Calu3 (cell line): ENCODE measurements at regions of chr2 and their contacts with region 1.

Region 1: GRCh38 chr2:152740743-152741328 is 22.4 kb downstream of the ARL6IP6 start:
- DNase-seq: no peak
- H3K4me3 Mint-ChIP-seq: no peak overlapping the region
- H3K27ac Mint-ChIP-seq: no peak overlapping the region
- H3K4me1 Mint-ChIP-seq: no peaks in the 10 kb centered on the region
- H3K27me3 Mint-ChIP-seq: no peaks in the 10 kb centered on the region
- CTCF ChIP-seq: peak; percentile 74

Region 2: GRCh38 chr2:151984424-151985083 is 756.3 kb before region 1 on chr2:
- CTCF ChIA-PET with region 1: no interaction called
- intact Hi-C with region 1: no loop called
- DNase-seq: no peak
- H3K4me3 Mint-ChIP-seq: no peak overlapping the region
- H3K27ac Mint-ChIP-seq: no peak overlapping the region
- H3K4me1 Mint-ChIP-seq: no peaks in the 10 kb centered on the region
- H3K27me3 Mint-ChIP-seq: peaks cover 23% of the 10 kb centered on the region
- CTCF ChIP-seq: no peak

Region 3: GRCh38 chr2:152864601-152865149 is 123.8 kb after region 1 on chr2:
- CTCF ChIA-PET with region 1: no interaction called
- intact Hi-C with region 1: no loop called
- DNase-seq: no peak
- H3K4me3 Mint-ChIP-seq: no peak overlapping the region
- H3K27ac Mint-ChIP-seq: no peak overlapping the region
- H3K4me1 Mint-ChIP-seq: no peaks in the 10 kb centered on the region
- H3K27me3 Mint-ChIP-seq: no peaks in the 10 kb centered on the region
- CTCF ChIP-seq: no peak

Region 4: DNA sequence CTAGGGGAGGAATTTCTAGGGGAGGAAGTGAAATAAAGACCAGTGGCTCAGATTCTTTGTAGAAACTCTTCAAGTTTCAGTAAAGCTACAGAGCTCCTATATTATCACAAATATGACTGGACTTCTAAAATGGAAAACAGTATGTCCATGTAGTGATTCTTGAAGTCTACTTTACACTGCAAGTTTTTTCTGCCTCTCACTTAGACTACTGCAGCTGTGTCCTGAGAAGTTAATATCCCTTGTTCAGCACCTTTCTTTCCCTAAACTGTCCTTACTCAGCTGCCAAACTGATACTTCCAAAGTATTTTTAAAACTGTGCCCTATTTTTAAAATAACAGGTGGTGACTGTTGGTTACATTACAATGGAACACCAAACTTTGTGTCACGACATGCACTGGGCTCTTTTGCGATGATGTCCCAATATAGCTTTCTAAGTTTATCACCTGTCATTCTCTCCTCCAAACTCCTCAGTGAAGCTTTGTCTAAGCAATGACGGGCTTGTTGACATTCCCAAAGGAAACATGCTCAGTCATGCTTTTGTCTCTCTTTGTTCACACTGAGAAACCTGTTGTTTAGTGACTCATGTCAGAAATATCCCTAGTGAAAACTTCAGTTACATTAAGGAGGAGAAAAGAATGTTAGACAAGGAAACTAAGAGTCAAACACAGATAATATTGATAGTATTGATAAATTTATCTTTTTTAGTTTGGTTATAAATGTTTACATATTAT is 318.7 kb after region 1 on chr2:
- CTCF ChIA-PET with region 1: no interaction called
- intact Hi-C with region 1: loop called (anchors 5 kb)
- DNase-seq: peak; percentile 37
- H3K4me3 Mint-ChIP-seq: peak overlapping the region; percentile 31
- H3K27ac Mint-ChIP-seq: peak overlapping the region; percentile 87
- H3K4me1 Mint-ChIP-seq: peaks cover 13% of the 10 kb centered on the region
- H3K27me3 Mint-ChIP-seq: no peaks in the 10 kb centered on the region
- CTCF ChIP-seq: no peak

Region 5: DNA sequence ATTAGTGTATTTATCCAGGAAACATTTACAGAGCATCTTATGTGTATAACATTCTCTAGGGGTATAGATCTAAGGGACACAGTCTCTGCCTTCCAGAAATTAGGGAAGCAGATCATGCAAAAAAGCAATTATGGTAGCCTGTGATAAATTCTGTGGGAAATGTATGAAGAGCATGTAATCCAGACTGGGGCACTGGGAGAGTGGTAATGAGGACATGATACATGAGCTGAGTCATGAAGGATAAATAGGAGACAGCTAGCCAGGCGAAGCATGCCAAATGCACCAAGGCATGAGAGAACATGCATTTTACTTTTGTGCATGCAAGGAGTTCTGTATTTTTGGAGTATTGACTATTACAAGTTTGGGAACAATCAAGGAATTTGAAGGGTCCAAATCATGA is 746.6 kb after region 1 on chr2:
- CTCF ChIA-PET with region 1: no interaction called
- intact Hi-C with region 1: loop called (anchors 10 kb)
- DNase-seq: no peak
- H3K4me3 Mint-ChIP-seq: no peak overlapping the region
- H3K27ac Mint-ChIP-seq: no peak overlapping the region
- H3K4me1 Mint-ChIP-seq: no peaks in the 10 kb centered on the region
- H3K27me3 Mint-ChIP-seq: no peaks in the 10 kb centered on the region
- CTCF ChIP-seq: no peak

Region 6: DNA sequence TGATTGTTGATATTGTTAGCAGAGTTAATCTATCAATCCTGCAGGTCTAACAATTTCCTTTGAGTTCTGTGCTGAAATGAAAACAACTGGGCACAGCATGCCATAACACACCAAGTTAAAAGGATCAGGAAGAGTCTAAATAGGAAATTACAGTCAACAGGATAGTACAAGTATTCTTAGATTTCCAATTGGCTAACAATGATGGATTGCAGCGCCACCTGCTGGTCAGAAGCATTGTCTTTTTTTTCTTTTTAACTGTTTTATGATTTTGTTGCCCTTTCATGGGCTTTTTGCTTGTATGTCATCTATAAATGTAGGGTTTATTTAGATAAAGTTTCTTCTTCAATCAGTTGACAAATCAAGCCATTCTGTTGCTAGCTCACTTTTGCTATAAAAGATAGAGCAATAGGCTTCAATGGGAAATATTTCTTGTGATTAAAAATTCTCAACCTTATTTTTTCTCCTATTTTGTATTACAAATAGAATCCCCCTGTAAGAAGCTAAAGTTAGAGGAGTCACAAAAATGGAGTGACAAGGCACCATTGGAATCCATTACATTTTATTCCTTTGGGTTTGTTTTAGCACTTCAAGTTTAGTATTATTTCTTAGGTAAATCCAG is 778.5 kb after region 1 on chr2:
- CTCF ChIA-PET with region 1: no interaction called
- intact Hi-C with region 1: loop called (anchors 2 kb)
- DNase-seq: peak; percentile 54
- H3K4me3 Mint-ChIP-seq: no peak overlapping the region
- H3K27ac Mint-ChIP-seq: no peak overlapping the region
- H3K4me1 Mint-ChIP-seq: no peaks in the 10 kb centered on the region
- H3K27me3 Mint-ChIP-seq: no peaks in the 10 kb centered on the region
- CTCF ChIP-seq: peak; percentile 62